ENCODE measurements at regions of chr9 and their contacts with region 1.

Region 1: GRCh38 chr9:84170521-84171141 is 169.9 kb downstream of the SLC28A3 start:
- DNase-seq: peak; percentile 81
- ATAC-seq: peak; percentile 95
- H3K4me3 ChIP-seq: peak overlapping the region in 1 of 2 experiments; percentile 25; a peak in 2 of 4 replicates
- H3K27ac ChIP-seq: peak overlapping the region; percentile 12; the same call in 1 of the 2 replicates
- H3K4me1 ChIP-seq: peaks cover 9 to 19% of the 10 kb centered on the region in 2 experiments; a peak in 3 of 4 replicates
- H3K27me3 ChIP-seq: no peaks in the 10 kb centered on the region
- CTCF ChIP-seq: no peak
- POLR2A ChIP-seq: no peak
- RAD21 ChIP-seq: no peak

Region 2: DNA sequence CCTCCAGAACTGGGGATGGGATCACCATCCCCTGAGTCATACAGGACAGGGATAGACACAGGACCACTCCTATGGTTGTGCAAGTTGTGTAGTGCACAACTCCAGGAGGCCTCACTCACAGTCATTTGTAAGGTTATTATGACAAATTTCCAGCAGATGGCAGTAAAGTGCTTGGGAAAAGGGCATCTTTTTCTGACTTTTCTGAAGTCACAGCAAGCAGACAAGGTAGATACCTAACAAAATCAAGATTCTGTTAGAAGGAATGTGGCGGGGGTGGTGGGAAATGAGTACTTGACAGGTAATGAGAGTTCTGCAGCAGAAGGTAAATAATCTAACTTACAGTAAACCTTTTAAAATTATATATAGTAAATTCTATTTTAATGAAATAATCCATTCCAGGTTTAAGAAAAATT is 232.7 kb before region 1 on chr9:
- CTCF ChIA-PET with region 1: no interaction called
- POLR2A ChIA-PET with region 1: no interaction called
- RAD21 ChIA-PET with region 1: no interaction called
- intact Hi-C with region 1: loop called (anchors 2 kb)
- DNase-seq: peak; percentile 62
- ATAC-seq: peak; percentile 89
- H3K4me3 ChIP-seq: no peak overlapping the region
- H3K27ac ChIP-seq: no peak overlapping the region
- H3K4me1 ChIP-seq: peaks cover 7 to 13% of the 10 kb centered on the region in 2 experiments; a peak in 3 of 4 replicates
- H3K27me3 ChIP-seq: no peaks in the 10 kb centered on the region
- CTCF ChIP-seq: peak; percentile 44 to 90 (median 78); a peak in 5 of 6 replicates
- POLR2A ChIP-seq: no peak
- RAD21 ChIP-seq: peak; percentile 94

Region 3: DNA sequence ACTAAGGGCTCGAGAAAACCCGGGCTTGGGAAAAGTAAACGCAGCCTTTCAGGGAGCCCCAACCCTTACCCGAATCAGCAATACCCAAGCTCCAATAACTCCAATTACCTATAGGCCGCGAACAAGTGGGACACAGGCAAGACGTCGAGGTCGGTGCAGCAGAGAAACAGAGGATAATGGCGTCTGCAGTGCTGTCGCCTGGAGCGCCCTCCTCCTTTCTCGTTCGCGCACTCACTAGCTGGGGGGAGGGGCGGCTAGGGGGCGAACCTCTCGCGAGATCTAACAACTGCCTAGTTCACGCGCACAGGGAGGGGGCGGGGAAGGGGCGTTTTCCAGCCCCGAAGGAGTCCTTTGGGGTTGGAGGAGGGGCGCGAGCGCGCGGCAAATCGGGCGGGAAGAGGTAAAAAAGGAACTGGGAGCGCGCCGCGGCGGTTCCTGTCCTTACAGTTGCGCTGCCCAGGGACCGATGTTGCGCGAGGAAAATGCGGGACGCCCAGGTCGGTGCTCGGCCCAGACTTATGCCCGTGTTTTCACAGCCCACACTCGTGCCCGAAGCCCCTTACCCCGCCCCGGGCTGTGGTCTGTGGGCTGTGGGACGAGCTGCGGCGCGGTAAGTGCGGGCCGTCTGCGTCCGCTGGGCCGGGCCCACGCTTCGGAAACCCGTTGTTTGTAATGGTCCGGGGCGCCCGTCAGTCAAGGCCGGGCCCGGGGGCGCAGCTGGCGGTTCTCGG is 190.1 kb before region 1 on chr9 and contains the start of gene RMI1:
- CTCF ChIA-PET with region 1: interaction called, 5 read pairs
- POLR2A ChIA-PET with region 1: interaction called, 5 read pairs
- RAD21 ChIA-PET with region 1: no interaction called
- intact Hi-C with region 1: loop called (anchors 5 kb)
- DNase-seq: peak; percentile 95
- ATAC-seq: peak; percentile 82
- H3K4me3 ChIP-seq: peak within 1 kb of the TSS; percentile 77 to 94
- H3K27ac ChIP-seq: peak within 1 kb of the TSS; percentile 96
- H3K4me1 ChIP-seq: peaks cover 9 to 24% of the 10 kb centered on the region in 2 experiments; a peak in 3 of 4 replicates
- H3K27me3 ChIP-seq: no peaks in the 10 kb centered on the region
- CTCF ChIP-seq: 0 out of 6 replicates have a peak, but pooled peaks of 1 of the 3 experiments have one; percentile 7
- POLR2A ChIP-seq: peak; percentile 80
- RAD21 ChIP-seq: no peak; the same call in none of the 2 replicates
- total RNA-seq, gene RMI1: 26.8 TPM

Region 4: GRCh38 chr9:84187090-84187489 is 16.5 kb after region 1 on chr9:
- CTCF ChIA-PET with region 1: interaction called, 10 read pairs
- POLR2A ChIA-PET with region 1: no interaction called
- RAD21 ChIA-PET with region 1: no interaction called
- intact Hi-C with region 1: no loop called
- DNase-seq: no peak
- ATAC-seq: no peak
- H3K4me3 ChIP-seq: no peak overlapping the region
- H3K27ac ChIP-seq: no peak overlapping the region
- H3K4me1 ChIP-seq: peaks cover 0 to 2% of the 10 kb centered on the region in 2 experiments; a peak in 2 of 4 replicates
- H3K27me3 ChIP-seq: 0 out of 2 replicates have a peak, but pooled peaks cover 2% of the 10 kb centered on the region
- CTCF ChIP-seq: no peak
- POLR2A ChIP-seq: no peak
- RAD21 ChIP-seq: no peak

Region 5: DNA sequence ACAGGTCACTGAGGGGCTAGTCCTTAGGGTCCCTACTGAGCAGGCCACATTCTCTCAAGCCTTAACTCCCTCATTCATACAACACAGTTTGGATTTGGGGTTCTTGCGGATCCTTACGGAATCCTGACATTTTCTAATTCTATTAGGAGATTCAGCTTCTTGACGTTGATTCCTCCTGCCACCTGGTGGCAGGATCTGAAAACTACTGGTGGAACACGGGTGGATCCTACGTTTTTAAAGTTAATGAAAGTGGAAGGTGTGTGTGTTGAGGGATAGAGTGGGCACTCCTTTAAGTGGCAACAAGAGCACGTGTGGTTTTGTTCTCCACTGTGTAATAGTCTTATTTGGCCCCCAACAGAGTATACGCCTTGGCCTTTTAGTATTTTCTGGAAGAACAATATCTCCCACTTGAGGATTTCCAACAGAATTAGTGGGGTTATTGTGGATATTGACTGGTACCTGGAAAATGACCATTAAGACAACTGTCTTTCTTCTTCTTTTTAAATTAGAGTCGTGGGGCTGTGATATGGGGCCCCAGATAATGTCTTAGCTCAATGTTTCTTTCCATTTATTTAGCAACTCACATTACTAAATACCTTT is 144.7 kb after region 1 on chr9:
- CTCF ChIA-PET with region 1: no interaction called
- POLR2A ChIA-PET with region 1: no interaction called
- RAD21 ChIA-PET with region 1: no interaction called
- intact Hi-C with region 1: loop called (anchors 5 kb)
- DNase-seq: peak; percentile 61
- ATAC-seq: peak; percentile 92
- H3K4me3 ChIP-seq: no peak overlapping the region
- H3K27ac ChIP-seq: no peak overlapping the region
- H3K4me1 ChIP-seq: no peaks in the 10 kb centered on the region
- H3K27me3 ChIP-seq: no peaks in the 10 kb centered on the region
- CTCF ChIP-seq: peak; percentile 71 to 83 (median 73)
- POLR2A ChIP-seq: no peak
- RAD21 ChIP-seq: peak; percentile 88